ENCODE measurements at regions of chr9 and their contacts with region 1.

Region 1: GRCh38 chr9:73200694-73201452 is 49.2 kb downstream of the ANXA1 start:
- DNase-seq: peak; percentile 44
- H3K4me3 Mint-ChIP-seq: no peak overlapping the region
- H3K27ac Mint-ChIP-seq: no peak overlapping the region
- H3K4me1 Mint-ChIP-seq: no peaks in the 10 kb centered on the region
- H3K27me3 Mint-ChIP-seq: peaks cover 82% of the 10 kb centered on the region
- CTCF ChIP-seq: peak; percentile 43

Region 2: GRCh38 chr9:72894342-72894741 is 306.5 kb before region 1 on chr9:
- CTCF ChIA-PET with region 1: no interaction called
- POLR2A ChIA-PET with region 1: no interaction called
- intact Hi-C with region 1: no loop called
- DNase-seq: no peak
- H3K4me3 Mint-ChIP-seq: no peak overlapping the region
- H3K27ac Mint-ChIP-seq: no peak overlapping the region
- H3K4me1 Mint-ChIP-seq: no peaks in the 10 kb centered on the region
- H3K27me3 Mint-ChIP-seq: peaks cover 80% of the 10 kb centered on the region
- CTCF ChIP-seq: no peak

Region 3: DNA sequence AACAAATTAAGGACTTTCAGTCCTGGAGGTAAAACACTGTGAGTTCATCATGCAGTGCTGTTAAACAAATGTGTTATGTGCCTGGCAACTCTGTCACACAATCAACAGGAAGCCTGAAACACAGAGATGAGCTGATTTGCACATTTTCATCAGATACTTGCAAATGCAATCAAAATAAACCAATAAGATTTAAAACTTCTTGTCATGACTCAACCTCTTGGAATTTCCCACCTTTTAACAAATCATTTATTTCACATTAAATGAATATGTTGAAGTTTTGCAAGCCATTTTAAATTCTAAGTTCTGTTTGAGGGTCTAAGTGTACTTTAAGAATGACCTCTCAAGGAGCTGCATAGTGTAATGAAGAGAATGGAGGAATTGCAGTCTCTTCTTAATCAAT is 15.2 kb after region 1 on chr9:
- CTCF ChIA-PET with region 1: interaction called, 22 read pairs
- POLR2A ChIA-PET with region 1: interaction called, 3 read pairs
- intact Hi-C with region 1: no loop called
- DNase-seq: no peak
- H3K4me3 Mint-ChIP-seq: no peak overlapping the region
- H3K27ac Mint-ChIP-seq: no peak overlapping the region
- H3K4me1 Mint-ChIP-seq: peaks cover 8% of the 10 kb centered on the region
- H3K27me3 Mint-ChIP-seq: peaks cover 63% of the 10 kb centered on the region
- CTCF ChIP-seq: no peak

Region 4: DNA sequence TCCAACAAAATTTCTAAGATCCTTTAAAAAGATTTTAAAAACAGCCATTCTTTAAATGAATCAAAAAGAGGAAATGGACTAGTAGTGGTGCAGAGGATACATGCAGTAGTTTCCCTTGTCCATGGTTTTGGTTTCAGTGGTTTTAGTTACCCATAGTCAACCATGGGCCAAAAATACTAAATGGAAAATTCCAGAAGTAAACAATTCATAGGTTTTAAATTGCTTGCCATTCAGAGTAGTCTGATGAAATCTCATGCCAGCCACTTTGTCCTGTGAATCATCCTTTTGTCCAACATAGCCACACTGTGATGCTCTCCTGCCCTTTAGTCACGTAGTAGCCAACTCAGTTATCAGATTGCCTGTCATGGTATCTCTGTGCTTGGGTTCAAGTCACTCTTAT is 236.9 kb after region 1 on chr9:
- CTCF ChIA-PET with region 1: no interaction called
- POLR2A ChIA-PET with region 1: no interaction called
- intact Hi-C with region 1: no loop called
- DNase-seq: no peak
- H3K4me3 Mint-ChIP-seq: no peak overlapping the region
- H3K27ac Mint-ChIP-seq: no peak overlapping the region
- H3K4me1 Mint-ChIP-seq: peaks cover 5% of the 10 kb centered on the region
- H3K27me3 Mint-ChIP-seq: peaks cover 55% of the 10 kb centered on the region
- CTCF ChIP-seq: no peak

Region 5: GRCh38 chr9:73565833-73566465 is 365.1 kb after region 1 on chr9:
- CTCF ChIA-PET with region 1: interaction called, 10 read pairs
- POLR2A ChIA-PET with region 1: no interaction called
- intact Hi-C with region 1: loop called (anchors 1 kb)
- DNase-seq: peak; percentile 27
- H3K4me3 Mint-ChIP-seq: no peak overlapping the region
- H3K27ac Mint-ChIP-seq: no peak overlapping the region
- H3K4me1 Mint-ChIP-seq: no peaks in the 10 kb centered on the region
- H3K27me3 Mint-ChIP-seq: peaks cover 69% of the 10 kb centered on the region
- CTCF ChIP-seq: peak; percentile 26

Region 6: DNA sequence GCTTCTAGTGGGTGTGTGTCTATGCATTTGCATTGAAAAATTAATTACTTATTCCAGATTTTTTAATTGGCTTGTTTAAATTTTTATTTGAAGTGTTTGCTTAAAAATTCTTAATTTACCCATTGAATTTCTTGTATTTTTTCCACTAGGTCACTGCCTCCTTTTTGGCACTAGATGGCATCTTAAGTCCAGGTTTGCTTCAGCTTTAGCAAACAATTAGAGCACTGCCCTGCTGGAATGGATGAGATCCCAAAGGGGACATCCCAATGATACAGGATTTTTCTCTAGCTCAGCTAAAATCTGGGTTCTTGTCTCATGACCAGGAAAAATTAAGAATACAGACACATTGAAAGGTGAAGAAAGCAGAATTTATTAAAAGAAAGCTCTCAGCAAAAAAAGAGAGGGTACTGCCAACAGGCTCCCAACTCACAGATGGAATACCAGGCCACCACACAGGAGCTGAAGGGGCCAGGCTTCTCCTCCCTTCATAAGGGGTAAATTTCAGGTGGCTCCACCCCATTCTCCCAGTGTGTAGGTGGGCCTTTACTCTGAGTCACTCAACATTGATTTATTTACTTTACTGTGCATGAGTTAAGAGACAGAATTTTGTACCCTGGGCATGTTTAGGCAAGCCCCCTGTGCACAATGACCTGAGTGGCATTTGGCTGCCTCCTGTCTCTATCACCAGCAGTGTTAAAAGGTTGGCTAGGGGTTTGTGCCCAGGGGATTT is 483.2 kb after region 1 on chr9:
- CTCF ChIA-PET with region 1: interaction called, 9 read pairs
- POLR2A ChIA-PET with region 1: no interaction called
- intact Hi-C with region 1: loop called (anchors 1 kb)
- DNase-seq: peak; percentile 69
- H3K4me3 Mint-ChIP-seq: no peak overlapping the region
- H3K27ac Mint-ChIP-seq: peak overlapping the region; percentile 40
- H3K4me1 Mint-ChIP-seq: peaks cover 13% of the 10 kb centered on the region
- H3K27me3 Mint-ChIP-seq: peaks cover 32% of the 10 kb centered on the region
- CTCF ChIP-seq: peak; percentile 89

Region 7: GRCh38 chr9:74570879-74571512 is 1370.1 kb after region 1 on chr9:
- CTCF ChIA-PET with region 1: interaction called, 17 read pairs
- POLR2A ChIA-PET with region 1: no interaction called
- intact Hi-C with region 1: loop called (anchors 1 kb)
- DNase-seq: peak; percentile 33
- H3K4me3 Mint-ChIP-seq: no peak overlapping the region
- H3K27ac Mint-ChIP-seq: no peak overlapping the region
- H3K4me1 Mint-ChIP-seq: no peaks in the 10 kb centered on the region
- H3K27me3 Mint-ChIP-seq: peaks cover 51% of the 10 kb centered on the region
- CTCF ChIP-seq: peak; percentile 68

Measured in MCF 10A (cell line).